ENCODE measurements at regions of chr16 and their contacts with region 1.

Region 1: DNA sequence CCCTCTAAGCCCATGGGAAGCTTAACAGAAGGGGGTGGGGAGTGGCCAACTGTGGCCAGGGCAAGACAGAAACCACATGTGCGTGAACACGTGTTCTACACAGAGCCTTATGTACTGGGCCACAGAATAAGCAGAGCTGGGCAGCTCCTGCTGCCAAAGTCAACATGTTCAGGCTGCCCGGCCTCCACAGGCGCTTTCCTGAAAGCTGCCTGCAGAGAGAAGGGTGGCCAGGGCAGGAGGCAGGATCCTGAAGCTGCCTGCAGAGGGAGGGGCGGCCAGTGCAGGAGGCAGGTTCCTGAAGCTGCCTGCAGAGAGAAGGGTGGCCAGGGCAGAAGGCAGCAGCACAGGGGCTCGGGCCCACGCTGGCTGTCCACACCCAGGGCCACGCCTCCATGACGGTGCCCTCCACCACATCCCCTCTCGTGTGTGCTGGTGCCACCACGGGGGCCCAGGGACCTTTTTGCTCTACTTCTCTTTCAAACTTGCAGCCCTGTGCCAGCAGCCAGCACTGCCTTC is 79.5 kb downstream of the ANKRD11 start:
- DNase-seq: peak; percentile 38
- ATAC-seq: peak; percentile 1
- H3K4me3 Mint-ChIP-seq: no peak overlapping the region
- H3K27ac Mint-ChIP-seq: peak overlapping the region; percentile 68
- H3K4me1 Mint-ChIP-seq: peaks cover 83% of the 10 kb centered on the region
- H3K27me3 Mint-ChIP-seq: no peaks in the 10 kb centered on the region

Region 2: GRCh38 chr16:89325861-89326471 is 84.9 kb before region 1 on chr16:
- CTCF ChIA-PET with region 1: no interaction called
- POLR2A ChIA-PET with region 1: no interaction called
- intact Hi-C with region 1: loop called in 1 of 2 experiments (anchors 5 kb)
- DNase-seq: no peak
- ATAC-seq: no peak
- H3K4me3 Mint-ChIP-seq: no peak overlapping the region
- H3K27ac Mint-ChIP-seq: peak overlapping the region; percentile 77
- H3K4me1 Mint-ChIP-seq: peaks cover 87% of the 10 kb centered on the region
- H3K27me3 Mint-ChIP-seq: no peaks in the 10 kb centered on the region

Region 3: GRCh38 chr16:89422905-89423630 is 12.2 kb after region 1 on chr16:
- CTCF ChIA-PET with region 1: interaction called, 5 read pairs
- POLR2A ChIA-PET with region 1: no interaction called
- intact Hi-C with region 1: loop called in 1 of 2 experiments (anchors 1 kb)
- DNase-seq: peak; percentile 80
- ATAC-seq: peak; percentile 80
- H3K4me3 Mint-ChIP-seq: peak overlapping the region; percentile 15
- H3K27ac Mint-ChIP-seq: peak overlapping the region; percentile 74
- H3K4me1 Mint-ChIP-seq: peaks cover 84% of the 10 kb centered on the region
- H3K27me3 Mint-ChIP-seq: no peaks in the 10 kb centered on the region

Region 4: GRCh38 chr16:89436366-89436765 is 25.5 kb after region 1 on chr16:
- CTCF ChIA-PET with region 1: interaction called, 5 read pairs
- POLR2A ChIA-PET with region 1: no interaction called
- intact Hi-C with region 1: loop called in 1 of 2 experiments (anchors 2 kb)
- DNase-seq: no peak
- ATAC-seq: no peak
- H3K4me3 Mint-ChIP-seq: no peak overlapping the region
- H3K27ac Mint-ChIP-seq: no peak overlapping the region
- H3K4me1 Mint-ChIP-seq: peaks cover 74% of the 10 kb centered on the region
- H3K27me3 Mint-ChIP-seq: no peaks in the 10 kb centered on the region